ENCODE measurements at regions of chr4 and their contacts with region 1.

Region 1: GRCh38 chr4:153466081-153466948 is at the start of gene TMEM131L:
- DNase-seq: peak; percentile 85
- ATAC-seq: peak; percentile 89
- total RNA-seq, gene TMEM131L: 13.7 TPM

Region 2: DNA sequence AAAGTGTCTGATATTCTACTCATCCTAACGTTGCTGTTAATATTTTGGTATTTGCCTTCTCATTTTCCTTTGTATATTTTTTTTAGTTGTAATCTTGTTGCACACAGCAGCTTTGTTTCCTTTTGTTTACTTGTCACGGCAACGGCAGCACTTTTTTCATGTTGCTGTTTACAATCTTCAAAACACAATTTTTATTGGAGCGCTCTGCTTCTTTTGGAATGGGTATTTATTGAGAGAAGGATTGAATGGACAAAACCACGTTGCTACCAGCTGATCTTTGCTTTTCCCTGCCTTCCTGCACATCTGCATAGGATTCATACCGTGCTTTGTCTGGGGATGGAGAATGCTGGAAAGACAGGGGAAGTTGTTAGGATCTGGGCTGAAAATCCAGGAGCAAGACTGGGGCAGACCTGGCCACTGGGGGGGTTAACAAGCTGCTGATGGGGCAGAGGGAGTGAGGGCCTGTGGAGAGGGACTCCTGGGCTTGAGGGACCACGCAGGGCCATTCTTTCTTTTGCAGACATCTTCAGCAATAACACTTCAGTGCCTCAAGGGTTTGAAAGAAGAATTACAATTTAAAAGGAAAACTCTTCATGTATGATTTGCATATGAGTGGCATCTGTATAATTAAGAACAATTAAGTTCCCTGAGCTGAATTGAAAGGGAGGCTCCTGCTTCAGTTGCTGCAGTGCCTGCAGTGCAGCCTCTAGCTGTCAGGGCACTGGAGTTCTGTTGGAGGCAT is 69.6 kb after region 1 on chr4:
- intact Hi-C with region 1: loop called (anchors 10 kb)
- DNase-seq: no peak
- ATAC-seq: no peak

Region 3: DNA sequence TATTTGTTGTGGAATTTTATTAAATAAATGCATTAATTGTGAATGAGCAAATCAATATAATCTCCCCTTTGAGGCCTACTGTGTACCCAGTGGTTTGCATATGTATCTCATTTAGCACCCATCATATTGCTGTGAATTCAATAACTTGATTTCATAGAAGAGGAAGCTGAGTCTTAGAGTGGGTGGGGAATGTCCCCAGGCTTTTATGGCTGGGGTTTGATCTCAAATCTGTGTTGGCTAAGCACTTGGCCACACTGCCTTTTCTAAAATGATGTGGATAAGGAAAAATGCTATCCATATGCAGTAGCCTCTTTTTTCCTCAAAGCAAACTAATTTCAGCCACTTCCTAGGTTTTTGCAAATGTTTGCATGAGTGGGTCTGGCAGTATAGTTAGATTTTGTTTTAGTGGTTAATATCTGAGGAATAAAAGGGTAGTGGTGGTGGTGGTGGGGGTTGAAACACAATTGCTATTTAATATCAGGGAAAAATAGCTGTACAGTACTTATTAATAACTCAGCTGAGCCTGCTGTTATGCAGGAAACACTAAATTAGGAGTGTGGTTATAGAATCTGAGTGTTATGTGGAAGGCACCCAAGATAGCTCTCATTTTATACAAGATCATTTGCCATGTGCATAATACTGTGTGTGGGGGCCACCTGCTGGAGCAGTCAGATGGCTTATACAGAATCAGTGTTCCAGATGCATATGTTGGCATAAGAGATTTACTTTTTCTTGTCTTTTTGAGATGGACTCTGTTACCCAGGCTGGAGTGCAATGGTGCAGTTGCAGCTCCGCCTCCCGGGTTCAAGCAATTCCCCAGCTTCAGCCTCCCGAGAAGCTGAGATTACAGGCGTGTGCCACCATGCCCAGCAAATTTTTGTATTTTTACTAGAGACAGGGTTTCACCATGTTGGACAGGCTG is 107.8 kb after region 1 on chr4:
- intact Hi-C with region 1: loop called (anchors 5 kb)
- DNase-seq: peak; percentile 81
- ATAC-seq: peak; percentile 90

Measured in Right ventricle myocardium superior (tissue), 1 donor.